ENCODE measurements at regions of chr3 and their contacts with region 1.

Region 1: DNA sequence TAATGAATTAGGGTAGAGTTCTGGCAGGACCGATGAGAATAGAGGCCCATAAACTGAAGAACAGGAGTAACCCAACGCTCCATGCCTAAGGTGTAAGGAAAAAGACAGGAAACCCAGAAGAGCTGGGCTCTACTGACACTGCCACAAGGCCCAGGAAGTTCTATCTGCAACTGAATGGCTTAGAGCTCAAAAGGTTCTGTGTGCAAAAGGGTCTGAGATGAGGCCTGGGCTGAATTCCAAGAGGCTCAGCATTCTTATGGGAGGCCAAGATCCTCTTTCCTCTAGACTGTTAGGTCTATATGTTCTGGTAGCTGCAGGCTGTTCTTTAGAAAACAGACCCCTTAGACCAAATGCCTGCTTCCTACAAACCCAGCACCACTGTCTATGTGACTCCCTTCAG is 30.5 kb upstream of the PRSS50 start:
- DNase-seq: no peak
- ATAC-seq: no peak
- H3K4me3 ChIP-seq: no peak overlapping the region
- H3K27ac ChIP-seq: no peak overlapping the region
- H3K4me1 ChIP-seq: no peaks in the 10 kb centered on the region
- H3K27me3 ChIP-seq: peaks cover 59% of the 10 kb centered on the region
- CTCF ChIP-seq: no peak
- POLR2A ChIP-seq: no peak
- RAD21 ChIP-seq: no peak

Region 2: DNA sequence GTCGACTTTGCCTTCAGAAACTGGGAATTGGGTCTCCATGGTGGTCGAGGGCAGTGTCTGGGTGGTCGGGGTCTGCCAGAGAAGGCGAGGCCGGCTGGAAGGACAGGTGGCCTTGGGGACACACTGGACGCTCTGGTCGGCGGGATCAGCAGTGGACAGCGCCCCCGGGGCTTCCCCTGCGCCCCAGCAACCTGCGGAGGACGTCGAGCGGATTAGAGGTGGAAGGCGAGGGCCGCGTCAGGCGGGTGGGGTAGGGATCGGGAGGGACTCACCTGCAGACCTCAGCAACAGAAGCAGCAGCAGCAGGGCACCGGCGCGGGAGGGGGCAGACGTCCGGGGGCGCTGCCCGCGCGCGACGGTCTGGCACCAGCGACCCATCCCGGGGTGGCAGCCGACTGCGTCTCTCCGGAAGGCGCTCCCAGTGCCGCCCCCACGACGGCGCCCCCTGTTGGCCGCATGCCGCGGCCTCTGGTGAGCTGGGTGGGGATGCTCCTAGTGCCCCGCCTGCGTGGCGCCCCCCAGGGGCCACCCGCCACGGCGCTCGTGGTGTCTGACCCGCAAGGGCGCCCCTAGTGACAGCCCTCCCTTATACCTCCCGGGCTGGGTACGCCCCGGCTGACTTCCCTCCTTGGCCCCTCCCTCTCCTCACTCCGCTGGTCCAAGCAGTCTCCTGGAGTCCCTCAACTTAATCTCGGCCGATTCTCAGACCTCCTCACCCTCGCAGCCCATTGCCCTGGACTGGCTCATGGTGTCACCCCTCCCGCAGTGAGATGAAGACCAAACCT is 30.5 kb before region 1 on chr3 and contains the start of gene PRSS50:
- CTCF ChIA-PET with region 1: no interaction called
- POLR2A ChIA-PET with region 1: no interaction called
- dilution Hi-C with region 1: no loop called
- in situ Hi-C with region 1: no loop called
- intact Hi-C with region 1: no loop called
- DNase-seq: no peak
- ATAC-seq: no peak
- H3K4me3 ChIP-seq: no peak within 1 kb of the TSS
- H3K27ac ChIP-seq: no peak within 1 kb of the TSS
- H3K4me1 ChIP-seq: no peaks in the 10 kb centered on the region
- H3K27me3 ChIP-seq: peaks cover 53% of the 10 kb centered on the region
- CTCF ChIP-seq: peak; percentile 48
- POLR2A ChIP-seq: no peak
- RAD21 ChIP-seq: no peak
- total RNA-seq, gene PRSS50: not detected in 2 replicates

Region 3: GRCh38 chr3:46812237-46812791 is 64.1 kb after region 1 on chr3:
- CTCF ChIA-PET with region 1: no interaction called
- POLR2A ChIA-PET with region 1: interaction called, 4 read pairs
- dilution Hi-C with region 1: no loop called
- in situ Hi-C with region 1: loop called (anchors 5 kb)
- intact Hi-C with region 1: loop called (anchors 1 kb)
- DNase-seq: peak; percentile 29
- ATAC-seq: peak; percentile 99
- H3K4me3 ChIP-seq: peak overlapping the region; percentile 36
- H3K27ac ChIP-seq: no peak overlapping the region
- H3K4me1 ChIP-seq: no peaks in the 10 kb centered on the region; the same call in 1 of the 2 replicates
- H3K27me3 ChIP-seq: peaks cover 29% of the 10 kb centered on the region
- CTCF ChIP-seq: no peak
- POLR2A ChIP-seq: no peak
- RAD21 ChIP-seq: no peak

Region 4: DNA sequence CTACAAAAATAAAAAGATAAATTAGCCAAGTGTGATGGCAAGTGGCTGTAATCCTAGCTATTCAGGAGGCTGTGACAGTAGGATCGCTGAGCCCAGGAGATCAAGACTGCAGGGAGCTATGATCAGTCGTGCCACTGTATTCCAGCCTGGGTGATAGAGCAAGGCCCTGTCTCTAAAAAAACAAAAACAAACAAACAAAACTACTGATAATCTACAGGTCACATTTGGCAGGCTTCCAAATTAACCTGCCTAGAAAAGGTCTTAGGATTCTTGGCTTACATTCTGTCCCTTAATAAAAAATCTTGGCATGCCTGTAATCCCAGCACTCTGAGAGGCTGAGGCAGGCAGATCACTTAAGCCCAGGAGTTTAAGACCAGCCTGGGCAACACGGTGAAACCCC is 449.1 kb after region 1 on chr3:
- CTCF ChIA-PET with region 1: no interaction called
- POLR2A ChIA-PET with region 1: no interaction called
- dilution Hi-C with region 1: no loop called
- in situ Hi-C with region 1: no loop called
- intact Hi-C with region 1: loop called (anchors 5 kb)
- DNase-seq: no peak
- ATAC-seq: no peak
- H3K4me3 ChIP-seq: no peak overlapping the region
- H3K27ac ChIP-seq: no peak overlapping the region
- H3K4me1 ChIP-seq: no peaks in the 10 kb centered on the region
- H3K27me3 ChIP-seq: no peaks in the 10 kb centered on the region
- CTCF ChIP-seq: no peak
- POLR2A ChIP-seq: no peak
- RAD21 ChIP-seq: no peak